Brain microvascular endothelial cell (primary cell): ENCODE measurements at regions of chr3 and their contacts with region 1.

Region 1: GRCh38 chr3:46629551-46630517 is 17.5 kb downstream of the FAM240A start:
- DNase-seq: peak; percentile 65
- H3K4me3 ChIP-seq: peak overlapping the region; percentile 48
- H3K27ac ChIP-seq: no peak overlapping the region
- H3K27me3 ChIP-seq: no peaks in the 10 kb centered on the region
- CTCF ChIP-seq: peak; percentile 94

Region 2: DNA sequence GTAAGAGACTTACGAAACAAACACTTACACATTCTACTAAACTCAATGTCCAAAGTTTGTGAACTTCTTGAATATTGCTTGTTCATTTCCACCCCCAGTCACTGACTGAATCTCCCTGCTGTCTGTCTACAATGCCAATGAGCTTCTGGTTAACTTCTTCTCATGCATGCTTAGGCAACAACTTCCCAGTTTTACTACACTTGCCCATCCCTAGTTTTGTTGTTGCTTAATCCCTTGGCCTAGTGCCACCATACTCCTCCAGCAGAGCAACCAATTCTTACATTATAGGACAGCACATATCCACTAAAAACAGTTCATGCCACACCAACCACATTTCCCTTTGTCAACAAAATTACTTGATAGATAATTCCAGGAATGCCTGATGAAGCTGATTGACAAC is 316.8 kb before region 1 on chr3:
- in situ Hi-C with region 1: no loop called
- DNase-seq: no peak
- H3K4me3 ChIP-seq: no peak overlapping the region
- H3K27ac ChIP-seq: no peak overlapping the region
- H3K27me3 ChIP-seq: no peaks in the 10 kb centered on the region
- CTCF ChIP-seq: no peak

Region 3: GRCh38 chr3:46488735-46489361 is 141.0 kb before region 1 on chr3:
- in situ Hi-C with region 1: loop called (anchors 25 kb)
- DNase-seq: peak; percentile 85
- H3K4me3 ChIP-seq: no peak overlapping the region
- H3K27ac ChIP-seq: no peak overlapping the region
- H3K27me3 ChIP-seq: no peaks in the 10 kb centered on the region
- CTCF ChIP-seq: peak; percentile 100

Region 4: GRCh38 chr3:47193871-47194859 is 564.3 kb after region 1 on chr3:
- in situ Hi-C with region 1: no loop called
- DNase-seq: no peak
- H3K4me3 ChIP-seq: no peak overlapping the region
- H3K27ac ChIP-seq: no peak overlapping the region
- H3K27me3 ChIP-seq: no peaks in the 10 kb centered on the region
- CTCF ChIP-seq: no peak

Region 5: DNA sequence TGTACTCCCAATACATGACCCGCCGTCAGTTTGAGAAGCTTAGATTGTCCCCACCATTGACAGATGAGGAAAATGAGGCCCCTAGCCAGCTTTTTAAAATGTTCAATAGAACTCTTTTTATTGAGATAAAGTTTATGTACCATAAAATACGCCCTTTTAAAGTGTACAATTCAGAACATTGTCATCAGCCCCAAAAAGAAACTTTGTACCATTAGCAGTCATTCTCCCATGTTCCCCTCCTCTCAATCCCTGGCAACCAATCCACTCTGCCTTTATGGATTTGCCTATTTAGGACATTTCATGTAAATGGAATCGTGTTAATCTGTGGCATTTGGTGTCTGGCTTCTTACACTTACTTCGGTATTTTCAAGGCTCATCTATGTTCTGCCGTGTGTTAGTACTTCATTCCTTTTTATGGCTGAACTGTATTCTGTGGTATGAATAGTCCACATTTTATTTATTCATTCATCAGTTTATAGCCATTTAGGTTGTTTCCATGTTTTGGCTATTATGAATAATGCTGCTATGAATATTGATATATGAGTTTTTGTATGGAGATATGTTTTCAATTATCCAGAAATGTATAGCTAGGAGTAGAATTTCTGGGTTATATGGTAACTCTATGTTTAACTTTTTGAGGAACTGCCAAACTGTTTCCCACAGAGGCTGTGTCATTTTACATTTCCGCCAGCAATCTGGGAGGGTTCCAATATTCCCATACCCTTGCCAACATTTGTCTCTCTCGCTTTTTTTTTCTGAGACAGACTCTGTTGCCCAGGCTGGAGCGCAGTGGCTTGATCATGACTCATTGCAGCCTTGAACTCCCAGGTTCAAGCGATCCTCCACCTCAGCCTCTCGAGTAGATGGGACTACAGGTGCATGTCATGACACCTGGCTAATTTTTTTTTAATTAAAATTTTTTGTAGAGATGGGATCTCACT is 735.6 kb after region 1 on chr3:
- in situ Hi-C with region 1: no loop called
- DNase-seq: peak; percentile 28
- H3K4me3 ChIP-seq: no peak overlapping the region
- H3K27ac ChIP-seq: no peak overlapping the region
- H3K27me3 ChIP-seq: no peaks in the 10 kb centered on the region
- CTCF ChIP-seq: no peak